WTC11 (cell line): ENCODE measurements at regions of chrX and their contacts with region 1.

Region 1: GRCh38 chrX:16839852-16840460 is 30.2 kb downstream of the RBBP7 start:
- DNase-seq: no peak
- ATAC-seq: peak; percentile 10; the same call in 1 of the 2 replicates
- H3K4me3 Mint-ChIP-seq: no peak overlapping the region
- H3K27ac Mint-ChIP-seq: peak overlapping the region; percentile 19; the same call in 1 of the 2 replicates
- H3K4me1 Mint-ChIP-seq: peaks cover 54% of the 10 kb centered on the region
- H3K27me3 Mint-ChIP-seq: no peaks in the 10 kb centered on the region
- CTCF ChIP-seq: no peak

Region 2: GRCh38 chrX:16743604-16744325 is 96.2 kb before region 1 on chrX:
- CTCF ChIA-PET with region 1: no interaction called
- POLR2A ChIA-PET with region 1: interaction called, 10 read pairs
- DNase-seq: no peak
- ATAC-seq: no peak
- H3K4me3 Mint-ChIP-seq: no peak overlapping the region
- H3K27ac Mint-ChIP-seq: no peak overlapping the region
- H3K4me1 Mint-ChIP-seq: no peaks in the 10 kb centered on the region
- H3K27me3 Mint-ChIP-seq: no peaks in the 10 kb centered on the region
- CTCF ChIP-seq: no peak